Naive thymus-derived CD4-positive, alpha-beta T cell (primary cell): ENCODE measurements at regions of chr19 and their contacts with region 1.

Region 1: DNA sequence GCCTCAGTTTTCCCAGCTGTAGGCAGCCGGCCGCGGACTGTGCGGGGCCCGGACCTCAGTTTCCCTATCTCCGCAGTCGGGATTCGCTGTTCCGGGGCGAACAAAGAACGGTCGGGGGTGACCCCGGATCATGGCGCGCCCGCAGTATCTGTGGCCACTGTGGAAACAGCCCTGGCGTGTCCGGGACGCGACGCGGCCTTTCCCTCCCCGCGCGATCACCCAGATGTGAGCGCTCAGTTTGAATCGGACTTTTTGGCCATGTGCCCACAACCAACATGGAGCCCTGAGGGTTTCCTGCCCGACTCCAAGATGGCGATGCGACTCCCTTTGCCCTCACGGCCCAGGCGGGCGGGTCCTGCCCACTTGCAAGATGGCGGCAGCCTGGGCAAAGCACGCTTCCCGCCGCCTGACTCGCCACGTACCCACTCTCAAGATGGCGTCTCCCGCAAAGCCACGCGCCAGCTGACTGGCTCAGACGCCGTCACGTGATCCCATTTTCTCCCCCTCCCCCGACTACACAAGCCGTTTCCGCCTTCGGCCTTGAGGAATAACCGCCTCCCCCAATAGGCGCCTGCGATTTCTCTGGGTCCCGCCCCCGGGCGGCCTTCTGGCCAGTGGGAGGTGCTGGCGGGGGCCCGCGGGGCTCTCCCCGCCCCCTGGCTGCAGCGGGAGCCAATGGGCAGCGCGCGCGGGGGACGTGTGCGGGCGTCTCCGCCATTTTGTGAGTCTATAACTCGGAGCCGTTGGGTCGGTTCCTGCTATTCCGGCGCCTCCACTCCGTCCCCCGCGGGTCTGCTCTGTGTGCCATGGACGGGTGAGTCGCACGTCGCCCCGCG is at the start of gene PTBP1:
- DNase-seq: peak; percentile 94 to 100 (median 100)
- ATAC-seq: peak; percentile 91
- H3K4me3 ChIP-seq: peak within 1 kb of the TSS; percentile 78
- H3K4me3 Mint-ChIP-seq: peak within 1 kb of the TSS; percentile 86 to 97 (median 94)
- H3K27ac ChIP-seq: peak within 1 kb of the TSS; percentile 78
- H3K27ac Mint-ChIP-seq: peak within 1 kb of the TSS; percentile 85 to 97 (median 92)
- H3K4me1 ChIP-seq: peaks cover 29 to 31% of the 10 kb centered on the region in 2 donors
- H3K4me1 Mint-ChIP-seq: peaks cover 26 to 36% (median 32%) of the 10 kb centered on the region in 7 donors
- H3K27me3 ChIP-seq: no peaks in the 10 kb centered on the region
- H3K27me3 Mint-ChIP-seq: peaks cover 0 to 2% (median 0%) of the 10 kb centered on the region in 5 donors
- total RNA-seq, gene PTBP1: 313 to 524 (median 326) TPM

Region 2: DNA sequence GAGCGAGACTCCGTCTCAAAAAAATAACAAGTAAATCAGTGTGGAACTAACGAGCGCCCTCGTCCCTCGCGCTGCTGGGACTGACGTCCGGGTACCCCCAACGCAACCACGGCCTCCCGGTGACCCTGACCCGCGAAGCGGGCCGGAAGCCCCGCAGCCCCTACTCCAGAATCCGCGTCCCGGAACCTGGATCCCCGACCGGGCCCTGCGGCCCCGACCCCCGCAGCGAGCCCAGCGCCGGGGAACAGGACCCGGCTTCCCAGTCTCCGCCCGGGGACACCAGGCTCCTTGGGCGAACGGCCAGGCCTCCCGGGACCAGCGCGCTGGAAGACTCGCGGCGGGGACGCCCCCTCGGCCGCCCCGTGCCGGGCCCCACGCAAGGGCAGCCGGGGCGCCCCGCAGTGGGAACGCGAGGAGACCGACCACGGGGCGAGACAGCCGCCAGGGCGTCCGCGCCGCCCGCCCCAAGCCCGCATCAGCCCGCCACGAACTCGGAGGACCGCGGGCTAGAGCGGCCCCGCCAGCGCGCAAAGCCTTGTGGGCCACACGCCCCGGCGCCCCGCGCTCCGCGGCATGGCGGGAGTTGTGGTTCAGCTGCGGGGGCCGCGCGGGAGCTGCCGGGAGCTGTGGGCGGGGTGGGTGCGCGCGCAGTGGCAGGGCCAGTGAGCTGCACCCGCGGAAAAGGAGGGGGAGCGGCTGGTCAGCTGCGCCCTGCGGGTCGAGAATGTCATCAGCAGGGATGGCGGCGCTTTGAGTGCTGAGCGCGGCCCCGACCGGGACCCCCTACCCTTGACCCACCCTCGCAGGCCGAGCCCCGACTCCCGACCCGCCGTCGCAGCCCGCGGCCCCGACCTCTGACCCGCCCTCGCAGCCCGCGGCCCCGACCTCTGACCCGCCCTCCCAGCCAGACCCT is 308.1 kb before region 1 on chr19:
- CTCF ChIA-PET with region 1: no interaction called
- POLR2A ChIA-PET with region 1: no interaction called
- intact Hi-C with region 1: loop called in 1 of 2 experiments (anchors 2 kb)
- DNase-seq: peak; percentile 88 to 95 (median 92)
- ATAC-seq: peak; percentile 97
- H3K4me3 ChIP-seq: peak overlapping the region; percentile 62
- H3K4me3 Mint-ChIP-seq: peak overlapping the region; percentile 65 to 87 (median 81)
- H3K27ac ChIP-seq: peak overlapping the region; percentile 96
- H3K27ac Mint-ChIP-seq: peak overlapping the region in 8 of 9 donors; percentile 69 to 88 (median 75)
- H3K4me1 ChIP-seq: peaks cover 0 to 5% of the 10 kb centered on the region in 2 donors
- H3K4me1 Mint-ChIP-seq: peaks cover 3 to 14% (median 9%) of the 10 kb centered on the region in 7 donors
- H3K27me3 ChIP-seq: no peaks in the 10 kb centered on the region
- H3K27me3 Mint-ChIP-seq: peaks cover 0 to 19% (median 11%) of the 10 kb centered on the region in 5 donors

Region 3: DNA sequence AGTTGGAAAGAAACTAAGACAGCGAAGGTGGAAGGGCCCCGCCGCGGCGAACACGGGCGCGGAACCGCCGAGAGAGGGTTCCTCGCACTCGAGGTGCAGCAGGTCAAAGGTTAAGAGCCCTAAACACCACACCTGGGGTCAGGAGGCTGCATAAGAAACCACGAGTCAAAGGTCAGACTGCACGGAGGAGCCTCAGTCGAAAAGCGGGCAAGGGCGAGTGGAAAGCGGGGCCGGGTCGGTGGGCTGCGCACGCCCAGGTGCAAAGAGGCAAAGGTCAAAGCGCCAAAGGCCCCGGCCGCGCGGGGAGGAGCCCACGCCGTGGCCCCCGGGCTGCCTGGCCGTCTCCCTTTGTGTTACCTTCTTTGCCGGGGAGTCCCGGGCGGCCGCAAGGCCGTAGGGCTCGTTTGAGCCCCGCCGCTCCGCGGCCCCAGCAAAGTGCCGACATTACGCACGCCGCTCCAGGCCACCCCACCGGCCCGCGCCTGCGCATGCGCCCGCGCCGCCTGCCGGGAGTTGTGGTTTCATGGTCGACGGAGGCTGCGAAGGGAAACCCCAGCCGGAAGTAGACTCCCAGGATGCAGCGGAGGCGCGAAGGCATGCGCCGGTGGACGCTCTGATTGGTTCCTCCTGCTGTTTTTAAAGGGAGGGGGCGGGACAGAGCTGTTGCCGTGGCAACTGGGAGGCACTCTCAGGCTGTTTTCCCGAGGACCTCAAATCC is 163.7 kb before region 1 on chr19 and contains the start of gene POLRMT:
- CTCF ChIA-PET with region 1: no interaction called
- POLR2A ChIA-PET with region 1: no interaction called
- intact Hi-C with region 1: loop called (anchors 1 kb)
- DNase-seq: peak; percentile 87 to 99 (median 96)
- ATAC-seq: peak; percentile 99
- H3K4me3 ChIP-seq: peak within 1 kb of the TSS; percentile 91
- H3K4me3 Mint-ChIP-seq: peak within 1 kb of the TSS; percentile 92 to 99 (median 97)
- H3K27ac ChIP-seq: peak within 1 kb of the TSS; percentile 78
- H3K27ac Mint-ChIP-seq: peak within 1 kb of the TSS; percentile 89 to 97 (median 93)
- H3K4me1 ChIP-seq: peaks cover 6 to 13% of the 10 kb centered on the region in 2 donors
- H3K4me1 Mint-ChIP-seq: peaks cover 13 to 41% (median 24%) of the 10 kb centered on the region in 7 donors
- H3K27me3 ChIP-seq: no peaks in the 10 kb centered on the region
- H3K27me3 Mint-ChIP-seq: no peaks in the 10 kb centered on the region
- total RNA-seq, gene POLRMT: 61.2 to 105 (median 71.3) TPM

Region 4: GRCh38 chr19:771332-771785 is 25.6 kb before region 1 on chr19:
- CTCF ChIA-PET with region 1: no interaction called
- POLR2A ChIA-PET with region 1: no interaction called
- intact Hi-C with region 1: loop called in 1 of 2 experiments (anchors 2 kb)
- DNase-seq: no peak
- ATAC-seq: peak; percentile 67
- H3K4me3 ChIP-seq: no peak overlapping the region
- H3K4me3 Mint-ChIP-seq: no peak overlapping the region
- H3K27ac ChIP-seq: no peak overlapping the region
- H3K27ac Mint-ChIP-seq: no peak overlapping the region
- H3K4me1 ChIP-seq: no peaks in the 10 kb centered on the region
- H3K4me1 Mint-ChIP-seq: peaks cover 0 to 4% (median 0%) of the 10 kb centered on the region in 7 donors
- H3K27me3 ChIP-seq: no peaks in the 10 kb centered on the region
- H3K27me3 Mint-ChIP-seq: peaks cover 0 to 8% (median 4%) of the 10 kb centered on the region in 5 donors

Region 5: DNA sequence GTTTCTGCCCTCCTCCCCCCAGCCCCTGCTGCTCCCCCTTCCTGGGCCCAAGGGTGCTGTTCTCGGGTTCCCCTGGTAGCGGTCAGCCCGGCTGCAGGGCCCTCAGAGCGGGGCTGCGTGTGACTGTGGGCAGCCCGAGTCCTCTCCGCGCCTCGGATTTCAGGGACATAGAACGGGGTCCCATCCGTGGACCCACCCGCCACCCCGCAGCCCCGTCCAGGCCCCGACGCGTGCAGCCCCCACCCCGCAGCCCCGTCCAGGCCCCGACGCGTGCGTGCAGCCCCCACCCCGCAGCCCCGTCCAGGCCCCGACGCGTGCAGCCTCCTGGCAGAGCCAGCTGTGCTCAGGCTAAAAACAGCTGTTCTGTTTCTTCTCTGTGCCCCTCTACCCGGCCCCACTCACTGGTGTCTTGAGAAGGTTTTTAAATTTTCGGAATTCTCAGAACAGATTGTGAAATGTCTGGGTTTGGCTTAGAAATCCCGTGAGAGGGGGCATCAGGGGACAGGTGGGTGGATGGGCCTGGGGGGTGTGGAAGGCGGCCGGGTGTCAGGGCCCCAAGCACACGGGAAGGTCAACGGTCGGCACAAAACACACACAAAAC is 38.4 kb after region 1 on chr19:
- CTCF ChIA-PET with region 1: no interaction called
- POLR2A ChIA-PET with region 1: no interaction called
- intact Hi-C with region 1: no loop called
- DNase-seq: no peak
- ATAC-seq: no peak
- H3K4me3 ChIP-seq: no peak overlapping the region
- H3K4me3 Mint-ChIP-seq: no peak overlapping the region
- H3K27ac ChIP-seq: no peak overlapping the region
- H3K27ac Mint-ChIP-seq: no peak overlapping the region
- H3K4me1 ChIP-seq: no peaks in the 10 kb centered on the region
- H3K4me1 Mint-ChIP-seq: peaks cover 0 to 8% (median 0%) of the 10 kb centered on the region in 7 donors
- H3K27me3 ChIP-seq: no peaks in the 10 kb centered on the region
- H3K27me3 Mint-ChIP-seq: peaks cover 4 to 24% (median 7%) of the 10 kb centered on the region in 5 donors

Region 6: GRCh38 chr19:872266-872951 is 75.5 kb after region 1 on chr19:
- CTCF ChIA-PET with region 1: no interaction called
- POLR2A ChIA-PET with region 1: no interaction called
- intact Hi-C with region 1: loop called in 1 of 2 experiments (anchors 2 kb)
- DNase-seq: peak; percentile 63 to 91 (median 80)
- ATAC-seq: peak; percentile 86
- H3K4me3 ChIP-seq: peak overlapping the region; percentile 37
- H3K4me3 Mint-ChIP-seq: peak overlapping the region; percentile 72 to 86 (median 82)
- H3K27ac ChIP-seq: peak overlapping the region; percentile 54
- H3K27ac Mint-ChIP-seq: peak overlapping the region; percentile 86 to 95 (median 92)
- H3K4me1 ChIP-seq: peaks cover 8 to 14% of the 10 kb centered on the region in 2 donors
- H3K4me1 Mint-ChIP-seq: peaks cover 0 to 27% (median 12%) of the 10 kb centered on the region in 7 donors
- H3K27me3 ChIP-seq: no peaks in the 10 kb centered on the region
- H3K27me3 Mint-ChIP-seq: peaks cover 0 to 2% (median 0%) of the 10 kb centered on the region in 5 donors

Region 7: GRCh38 chr19:1094975-1095701 is 298.2 kb after region 1 on chr19 and contains the start of gene POLR2E:
- CTCF ChIA-PET with region 1: no interaction called
- POLR2A ChIA-PET with region 1: no interaction called
- intact Hi-C with region 1: loop called in 1 of 2 experiments (anchors 2 kb)
- DNase-seq: peak; percentile 97 to 99 (median 99)
- ATAC-seq: peak; percentile 98
- H3K4me3 ChIP-seq: peak within 1 kb of the TSS; percentile 68
- H3K4me3 Mint-ChIP-seq: peak within 1 kb of the TSS; percentile 80 to 97 (median 92)
- H3K27ac ChIP-seq: peak within 1 kb of the TSS; percentile 71
- H3K27ac Mint-ChIP-seq: peak within 1 kb of the TSS; percentile 87 to 97 (median 93)
- H3K4me1 ChIP-seq: peaks cover 18 to 23% of the 10 kb centered on the region in 2 donors
- H3K4me1 Mint-ChIP-seq: peaks cover 10 to 59% (median 44%) of the 10 kb centered on the region in 7 donors
- H3K27me3 ChIP-seq: no peaks in the 10 kb centered on the region
- H3K27me3 Mint-ChIP-seq: no peaks in the 10 kb centered on the region
- total RNA-seq, gene POLR2E: 75.3 to 157 (median 82.1) TPM

Region 8: DNA sequence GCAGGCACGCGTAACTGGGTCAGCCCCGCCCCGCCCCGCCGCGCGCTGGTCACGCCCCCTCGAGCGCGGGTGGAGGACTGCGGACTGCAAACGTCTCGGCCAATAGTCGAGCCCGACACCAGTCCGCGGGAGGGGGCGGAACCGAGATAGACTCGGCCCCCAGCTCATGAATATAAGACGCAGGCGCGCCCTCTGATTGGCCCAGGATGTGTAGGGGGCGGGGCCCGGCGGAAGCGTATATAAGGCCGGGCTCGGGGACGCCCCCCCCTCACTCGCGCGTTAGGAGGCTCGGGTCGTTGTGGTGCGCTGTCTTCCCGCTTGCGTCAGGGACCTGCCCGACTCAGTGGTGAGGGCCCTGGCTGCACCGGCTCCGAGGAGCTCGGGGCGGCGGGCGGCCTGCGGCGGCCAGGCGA is 472.2 kb after region 1 on chr19 and contains the start of gene CIRBP:
- CTCF ChIA-PET with region 1: no interaction called
- POLR2A ChIA-PET with region 1: interaction called, 5 read pairs
- intact Hi-C with region 1: loop called in 1 of 2 experiments (anchors 5 kb)
- DNase-seq: peak; percentile 95 to 99 (median 98)
- ATAC-seq: peak; percentile 90
- H3K4me3 ChIP-seq: peak within 1 kb of the TSS; percentile 76
- H3K4me3 Mint-ChIP-seq: peak within 1 kb of the TSS; percentile 88 to 96 (median 90)
- H3K27ac ChIP-seq: peak within 1 kb of the TSS; percentile 82
- H3K27ac Mint-ChIP-seq: peak within 1 kb of the TSS; percentile 87 to 94 (median 91)
- H3K4me1 ChIP-seq: peaks cover 60 to 61% of the 10 kb centered on the region in 2 donors
- H3K4me1 Mint-ChIP-seq: peaks cover 52 to 76% (median 62%) of the 10 kb centered on the region in 7 donors
- H3K27me3 ChIP-seq: no peaks in the 10 kb centered on the region
- H3K27me3 Mint-ChIP-seq: peaks cover 0 to 6% (median 0%) of the 10 kb centered on the region in 5 donors
- total RNA-seq, gene CIRBP: 237 to 629 (median 524) TPM